ENCODE measurements at regions of chr11 and their contacts with region 1.

Region 1: GRCh38 chr11:67317205-67317887 is 14.0 kb downstream of the SSH3 start:
- DNase-seq: peak; percentile 98
- H3K4me3 ChIP-seq: peak overlapping the region; percentile 56 to 76
- H3K27ac ChIP-seq: peak overlapping the region; percentile 89 to 95
- H3K4me1 ChIP-seq: peaks cover 4% of the 10 kb centered on the region
- H3K27me3 ChIP-seq: no peaks in the 10 kb centered on the region
- CTCF ChIP-seq: peak; percentile 93 to 99 (median 99)
- POLR2A ChIP-seq: no peak

Region 2: GRCh38 chr11:67146516-67147226 is 170.7 kb before region 1 on chr11:
- intact Hi-C with region 1: no loop called
- DNase-seq: no peak
- H3K4me3 ChIP-seq: no peak overlapping the region
- H3K27ac ChIP-seq: no peak overlapping the region
- H3K4me1 ChIP-seq: no peaks in the 10 kb centered on the region
- H3K27me3 ChIP-seq: no peaks in the 10 kb centered on the region
- CTCF ChIP-seq: no peak
- POLR2A ChIP-seq: no peak

Region 3: GRCh38 chr11:67202045-67202444 is 115.3 kb before region 1 on chr11:
- intact Hi-C with region 1: no loop called
- DNase-seq: no peak
- H3K4me3 ChIP-seq: no peak overlapping the region
- H3K27ac ChIP-seq: no peak overlapping the region
- H3K4me1 ChIP-seq: no peaks in the 10 kb centered on the region
- H3K27me3 ChIP-seq: no peaks in the 10 kb centered on the region
- CTCF ChIP-seq: no peak
- POLR2A ChIP-seq: no peak

Region 4: GRCh38 chr11:67252831-67253239 is 64.5 kb before region 1 on chr11:
- intact Hi-C with region 1: no loop called
- DNase-seq: no peak
- H3K4me3 ChIP-seq: no peak overlapping the region
- H3K27ac ChIP-seq: no peak overlapping the region
- H3K4me1 ChIP-seq: no peaks in the 10 kb centered on the region
- H3K27me3 ChIP-seq: no peaks in the 10 kb centered on the region
- CTCF ChIP-seq: peak in 1 of 3 experiments; percentile 21
- POLR2A ChIP-seq: no peak

Region 5: DNA sequence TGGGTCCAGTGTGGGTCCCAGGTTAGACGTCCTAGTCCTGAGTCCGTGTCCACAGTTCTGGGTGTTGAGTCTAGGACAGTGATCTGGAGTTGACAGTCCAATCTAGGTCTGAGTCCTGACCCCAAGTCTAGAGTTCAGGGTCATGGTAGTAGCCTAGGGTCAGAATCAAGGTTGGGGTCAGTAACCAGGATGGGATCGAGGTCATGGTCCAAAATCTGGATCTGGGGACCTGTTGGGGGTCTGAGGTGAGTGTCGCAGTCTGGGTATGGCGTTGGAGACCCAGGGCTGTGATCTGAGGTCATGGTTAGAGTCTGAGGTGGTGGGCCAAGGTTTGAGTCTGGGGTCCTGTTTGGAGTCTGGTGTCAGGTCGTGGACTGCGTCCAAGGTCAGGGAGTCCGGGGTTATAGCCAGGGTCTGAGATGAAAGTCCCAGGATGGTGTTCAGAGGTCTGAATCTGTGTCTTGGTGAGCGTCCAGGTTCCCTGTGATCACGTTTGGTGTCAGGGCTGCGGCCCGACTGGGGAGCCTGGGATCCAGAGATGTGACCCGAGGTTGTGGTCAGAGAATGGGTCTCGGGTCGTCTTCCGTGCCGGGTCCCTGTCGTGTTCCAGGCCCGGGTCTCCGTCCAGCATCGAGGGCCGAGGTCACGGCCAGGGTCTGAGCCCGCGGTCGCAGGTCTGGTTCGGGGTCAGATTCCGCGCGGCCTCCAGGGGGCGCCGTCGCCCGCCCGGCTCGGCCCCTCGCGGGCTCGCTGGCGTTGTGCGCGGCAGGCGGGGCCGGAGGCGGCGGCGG is 51.5 kb before region 1 on chr11:
- intact Hi-C with region 1: loop called (anchors 2 kb)
- DNase-seq: peak; percentile 80
- H3K4me3 ChIP-seq: no peak overlapping the region
- H3K27ac ChIP-seq: peak overlapping the region; percentile 79 to 80
- H3K4me1 ChIP-seq: peaks cover 53% of the 10 kb centered on the region
- H3K27me3 ChIP-seq: no peaks in the 10 kb centered on the region
- CTCF ChIP-seq: peak; percentile 73 to 96 (median 80)
- POLR2A ChIP-seq: no peak

Region 6: DNA sequence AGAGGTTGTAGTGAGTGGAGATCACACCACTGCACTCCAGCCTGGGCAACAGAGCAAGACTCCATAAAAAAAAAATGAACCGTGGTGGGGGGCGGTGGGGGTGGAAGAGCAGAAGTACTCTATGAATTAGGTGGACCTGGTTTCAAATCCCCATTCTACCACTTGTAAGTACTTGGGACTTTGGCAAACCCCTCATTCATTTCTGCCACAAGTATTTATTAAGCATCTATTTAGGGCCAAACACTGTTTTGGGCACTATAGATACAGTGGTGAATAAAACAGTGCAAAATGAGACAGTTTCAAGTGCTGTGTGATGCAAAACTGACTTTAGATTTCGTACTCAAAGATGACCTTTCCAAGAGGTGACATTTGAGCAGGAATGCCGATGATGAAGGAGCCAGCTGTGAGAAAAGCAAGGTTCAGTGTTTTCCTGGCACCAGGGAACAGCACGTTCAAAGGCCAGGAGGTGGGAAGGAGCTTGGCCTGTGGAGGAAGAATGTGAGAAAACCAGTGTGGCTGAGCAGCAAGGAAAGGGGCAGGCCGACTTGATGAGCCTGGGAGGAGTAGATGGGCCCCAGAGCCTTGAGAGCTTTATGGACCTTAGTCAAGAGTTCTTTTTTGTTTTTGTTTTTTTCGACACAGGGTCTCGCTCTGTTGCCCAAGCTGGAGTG is 153.1 kb after region 1 on chr11:
- intact Hi-C with region 1: no loop called
- DNase-seq: no peak
- H3K4me3 ChIP-seq: no peak overlapping the region
- H3K27ac ChIP-seq: no peak overlapping the region
- H3K4me1 ChIP-seq: peaks cover 9% of the 10 kb centered on the region
- H3K27me3 ChIP-seq: no peaks in the 10 kb centered on the region
- CTCF ChIP-seq: no peak
- POLR2A ChIP-seq: no peak

Measured in testis (tissue), 5 donors.